ENCODE measurements at regions of chr17 and their contacts with region 1.

Region 1: GRCh38 chr17:42019509-42020404 is at the start of gene NKIRAS2:
- DNase-seq: peak; percentile 93
- H3K4me3 Mint-ChIP-seq: peak within 1 kb of the TSS; percentile 100
- H3K27ac Mint-ChIP-seq: peak within 1 kb of the TSS; percentile 81
- H3K4me1 Mint-ChIP-seq: peaks cover 53% of the 10 kb centered on the region
- H3K27me3 Mint-ChIP-seq: no peaks in the 10 kb centered on the region
- total RNA-seq, gene NKIRAS2: 32.6 and 36.3 TPM in 2 replicates

Region 2: DNA sequence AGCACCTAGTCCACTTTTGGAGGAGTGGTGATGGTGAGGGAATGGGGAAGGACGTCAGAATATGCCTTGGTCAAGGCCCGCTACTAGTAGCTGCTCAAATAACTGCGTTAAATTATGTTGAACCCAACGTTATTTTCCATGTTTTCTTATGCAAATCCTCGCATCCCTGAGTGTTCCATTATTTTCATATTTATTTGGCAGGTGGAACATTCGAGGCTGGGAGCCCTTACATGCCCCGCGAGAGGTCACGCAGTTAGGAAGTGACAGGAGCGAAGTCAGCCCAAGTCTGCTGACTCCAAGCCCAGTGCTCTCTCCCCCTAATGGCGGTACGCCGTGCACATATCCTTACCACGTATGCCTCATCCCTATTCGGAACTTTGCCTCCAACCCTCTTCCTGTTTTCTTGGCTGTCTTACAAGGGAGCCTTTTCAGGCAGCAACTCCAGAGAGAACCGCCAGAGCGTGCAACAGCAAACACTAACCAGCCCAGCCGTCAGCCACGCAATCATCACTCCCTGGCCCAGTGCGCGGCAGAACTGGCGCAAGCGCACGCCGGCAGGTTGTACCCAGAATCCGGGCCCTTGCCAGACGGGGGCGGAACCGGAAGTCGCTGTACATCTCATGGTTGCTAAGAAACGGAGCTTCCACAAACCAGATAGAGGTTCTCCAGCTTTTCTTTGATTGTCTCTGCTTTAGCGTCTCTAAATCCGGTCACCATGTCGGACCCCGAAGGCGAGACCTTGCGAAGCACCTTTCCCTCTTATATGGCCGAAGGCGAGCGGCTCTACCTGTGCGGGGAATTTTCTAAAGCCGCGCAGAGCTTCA is 89.5 kb before region 1 on chr17 and contains the start of gene ODAD4:
- intact Hi-C with region 1: loop called (anchors 1 kb)
- DNase-seq: peak; percentile 95
- H3K4me3 Mint-ChIP-seq: peak within 1 kb of the TSS; percentile 97
- H3K27ac Mint-ChIP-seq: peak within 1 kb of the TSS; percentile 96
- H3K4me1 Mint-ChIP-seq: peaks cover 35% of the 10 kb centered on the region
- H3K27me3 Mint-ChIP-seq: no peaks in the 10 kb centered on the region
- total RNA-seq, gene ODAD4: 0.39 and 0.73 TPM in 2 replicates

Region 3: GRCh38 chr17:42112552-42113176 is 92.9 kb after region 1 on chr17 and contains the start of gene DHX58:
- intact Hi-C with region 1: loop called (anchors 1 kb)
- DNase-seq: peak; percentile 83
- H3K4me3 Mint-ChIP-seq: peak within 1 kb of the TSS; percentile 85
- H3K27ac Mint-ChIP-seq: peak within 1 kb of the TSS; percentile 86
- H3K4me1 Mint-ChIP-seq: peaks cover 50% of the 10 kb centered on the region
- H3K27me3 Mint-ChIP-seq: no peaks in the 10 kb centered on the region
- total RNA-seq, gene DHX58: 26.9 and 28.4 TPM in 2 replicates

Region 4: GRCh38 chr17:42153919-42154742 is 134.4 kb after region 1 on chr17:
- intact Hi-C with region 1: loop called (anchors 1 kb)
- DNase-seq: no peak
- H3K4me3 Mint-ChIP-seq: peak overlapping the region; percentile 89
- H3K27ac Mint-ChIP-seq: peak overlapping the region; percentile 75
- H3K4me1 Mint-ChIP-seq: peaks cover 25% of the 10 kb centered on the region
- H3K27me3 Mint-ChIP-seq: no peaks in the 10 kb centered on the region

Region 5: GRCh38 chr17:42405963-42406495 is 386.3 kb after region 1 on chr17:
- intact Hi-C with region 1: loop called (anchors 10 kb)
- DNase-seq: peak; percentile 73
- H3K4me3 Mint-ChIP-seq: no peak overlapping the region
- H3K27ac Mint-ChIP-seq: no peak overlapping the region
- H3K4me1 Mint-ChIP-seq: peaks cover 28% of the 10 kb centered on the region
- H3K27me3 Mint-ChIP-seq: peaks cover 8% of the 10 kb centered on the region

Region 6: DNA sequence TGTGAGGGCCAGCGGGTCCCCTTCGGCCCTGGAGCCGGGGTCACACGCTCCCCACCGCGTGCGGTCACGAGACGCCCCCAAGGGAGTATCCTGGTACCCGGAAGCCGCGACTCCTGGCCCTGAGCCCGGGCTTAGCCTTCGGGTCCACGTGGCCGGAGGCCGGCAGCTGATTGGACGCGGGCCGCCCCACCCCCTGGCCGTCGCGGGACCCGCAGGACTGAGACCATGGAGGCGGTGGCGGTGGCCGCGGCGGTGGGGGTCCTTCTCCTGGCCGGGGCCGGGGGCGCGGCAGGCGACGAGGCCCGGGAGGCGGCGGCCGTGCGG is 516.3 kb after region 1 on chr17 and contains the start of gene NAGLU:
- intact Hi-C with region 1: no loop called
- DNase-seq: peak; percentile 85
- H3K4me3 Mint-ChIP-seq: peak within 1 kb of the TSS; percentile 90
- H3K27ac Mint-ChIP-seq: peak within 1 kb of the TSS; percentile 89
- H3K4me1 Mint-ChIP-seq: peaks cover 33% of the 10 kb centered on the region
- H3K27me3 Mint-ChIP-seq: peaks cover 16% of the 10 kb centered on the region
- total RNA-seq, gene NAGLU: 18.2 and 20.8 TPM in 2 replicates

Measured in activated T-helper 1 cell treated with anti-CD3 and anti-CD28 coated beads, Interleukin-12 subunit alpha, Interleukin-12 subunit beta, Interleukin-2, Interleukin-4 antibody, amounts not matched to agents 30 ng/mL and 10 ng/mL and 1 ng/mL, durations not matched to agents 14 hours and 24 hours and 36 hours (primary cell).